Dorsolateral prefrontal cortex (tissue), 120 donors: ENCODE measurements at regions of chr1 and their contacts with region 1.

Region 1: DNA sequence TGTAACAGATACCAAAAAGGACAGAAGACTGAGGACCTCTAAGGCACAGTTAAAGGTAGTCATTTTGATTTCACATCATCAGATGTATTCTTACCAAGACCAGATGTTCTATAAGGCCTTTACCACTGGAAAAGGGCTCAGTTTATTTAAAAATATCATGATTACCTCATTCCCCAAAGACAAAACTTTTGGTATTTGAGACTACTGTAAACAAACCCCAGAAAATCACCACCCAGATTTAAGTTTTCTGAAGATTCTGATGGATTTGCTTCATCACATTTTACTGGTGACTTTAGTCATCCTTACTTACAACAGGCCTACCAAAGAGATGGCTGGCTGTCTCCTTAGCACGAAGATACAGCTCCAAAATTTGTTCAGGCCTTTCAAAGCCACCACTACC is 8.3 kb downstream of the ENAH start:
- DNase-seq: no peak
- H3K4me3 ChIP-seq: no peak overlapping the region
- H3K27ac ChIP-seq: peak overlapping the region in 1 of 59 donors; percentile 7
- H3K27me3 ChIP-seq: no peaks in the 10 kb centered on the region
- CTCF ChIP-seq: no peak

Region 2: DNA sequence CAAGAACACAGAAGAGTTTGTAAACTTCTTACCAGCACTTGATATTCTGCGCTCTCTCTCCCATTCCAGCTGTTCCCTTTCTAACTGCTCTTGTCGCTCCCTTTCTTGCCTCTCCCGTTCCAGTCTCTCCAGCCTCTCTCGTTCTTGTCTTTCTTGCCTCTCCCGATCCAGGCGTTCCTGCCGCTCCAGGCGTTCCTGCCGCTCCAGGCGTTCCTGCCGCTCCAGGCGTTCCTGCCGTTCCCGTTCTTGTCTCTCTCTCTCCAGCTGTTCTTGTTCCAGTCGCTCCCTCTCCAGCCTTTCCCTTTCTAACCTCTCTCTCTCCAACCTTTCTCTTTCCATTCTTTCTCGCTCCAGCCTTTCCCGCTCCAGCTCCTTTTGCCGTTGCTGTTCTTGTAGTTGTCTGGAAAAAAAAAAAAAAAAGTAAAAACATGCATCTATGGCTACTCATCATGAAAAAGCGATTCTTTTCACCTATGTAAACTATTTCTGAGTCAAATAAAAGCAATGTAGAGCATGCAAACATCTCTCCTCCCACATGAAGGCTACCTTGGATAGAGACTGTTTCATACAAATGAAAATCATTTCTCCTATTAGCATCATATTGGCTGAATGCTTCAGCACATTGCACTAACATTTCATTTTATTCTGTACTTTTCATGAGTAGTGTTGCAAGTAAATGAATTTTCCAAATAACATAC is 125.4 kb before region 1 on chr1:
- intact Hi-C with region 1: no loop called
- DNase-seq: peak in 1 of 10 donors; percentile 27
- H3K4me3 ChIP-seq: peak overlapping the region in 46 of 59 donors; percentile 1 to 64 (median 32)
- H3K27ac ChIP-seq: peak overlapping the region in 54 of 59 donors; percentile 0 to 98 (median 72)
- H3K27me3 ChIP-seq: no peaks in the 10 kb centered on the region
- CTCF ChIP-seq: no peak

Region 3: DNA sequence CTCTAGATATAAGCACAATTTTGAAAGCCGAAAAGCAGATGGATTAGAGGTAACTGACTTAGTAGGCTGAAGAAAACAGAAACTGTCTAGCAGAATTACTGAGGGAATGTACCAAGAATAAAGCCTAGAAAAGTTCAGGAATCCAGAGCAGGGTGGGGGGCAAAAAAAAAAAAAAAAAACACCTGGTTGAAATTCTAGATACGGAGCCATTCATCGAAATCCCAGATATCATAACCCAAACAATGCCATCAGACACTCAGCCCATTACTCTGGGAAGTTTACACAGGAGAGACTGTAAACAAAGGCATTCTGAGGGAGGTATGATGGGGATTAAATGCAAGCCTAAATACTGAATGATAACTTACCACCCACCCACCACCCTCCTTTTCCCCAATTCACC is 37.3 kb before region 1 on chr1:
- intact Hi-C with region 1: loop called in 1 of 2 experiments (anchors 5 kb)
- DNase-seq: no peak
- H3K4me3 ChIP-seq: no peak overlapping the region
- H3K27ac ChIP-seq: peak overlapping the region in 22 of 59 donors; percentile 2 to 62 (median 28)
- H3K27me3 ChIP-seq: no peaks in the 10 kb centered on the region
- CTCF ChIP-seq: no peak

Region 4: GRCh38 chr1:225754940-225755641 is 110.4 kb after region 1 on chr1:
- intact Hi-C with region 1: no loop called
- DNase-seq: no peak
- H3K4me3 ChIP-seq: no peak overlapping the region
- H3K27ac ChIP-seq: no peak overlapping the region
- H3K27me3 ChIP-seq: no peaks in the 10 kb centered on the region
- CTCF ChIP-seq: no peak